CD8-positive, alpha-beta memory T cell (primary cell): ENCODE measurements at regions of chr6 and their contacts with region 1.

Region 1: GRCh38 chr6:134063966-134064445 is 11.6 kb upstream of the SLC2A12 start:
- DNase-seq: peak; percentile 16 to 65 (median 40)
- H3K4me3 ChIP-seq: no peak overlapping the region
- H3K4me3 Mint-ChIP-seq: no peak overlapping the region
- H3K27ac ChIP-seq: no peak overlapping the region
- H3K27ac Mint-ChIP-seq: no peak overlapping the region
- H3K4me1 ChIP-seq: no peaks in the 10 kb centered on the region
- H3K4me1 Mint-ChIP-seq: peaks cover 0 to 4% (median 0%) of the 10 kb centered on the region in 3 donors
- H3K27me3 ChIP-seq: no peaks in the 10 kb centered on the region
- H3K27me3 Mint-ChIP-seq: peaks cover 2 to 7% of the 10 kb centered on the region in 2 donors

Region 2: DNA sequence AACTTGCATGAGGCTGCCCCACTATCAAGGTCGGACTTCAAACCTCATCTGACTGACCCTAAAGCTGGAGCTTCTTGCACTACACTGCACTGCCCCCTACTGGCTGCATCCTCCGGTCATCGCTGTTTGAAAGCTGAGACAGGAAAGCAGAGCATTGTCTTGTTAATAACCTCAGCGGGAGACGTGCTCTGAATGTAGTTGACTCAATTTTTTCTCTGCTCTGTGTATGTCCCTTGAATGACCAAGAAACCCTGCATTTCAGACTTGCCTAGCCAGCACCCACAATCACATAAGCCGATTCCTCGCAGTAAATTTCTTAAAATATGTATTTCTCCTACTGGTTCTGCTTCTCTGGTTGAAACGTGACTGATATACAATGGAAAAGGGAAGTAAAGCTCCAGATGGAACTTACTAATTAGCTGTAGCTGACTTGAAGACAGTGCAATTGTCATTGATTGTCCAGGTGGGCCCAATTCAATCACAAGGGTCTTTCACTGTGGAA is 147.3 kb before region 1 on chr6:
- CTCF ChIA-PET with region 1: interaction called, 104 read pairs
- POLR2A ChIA-PET with region 1: no interaction called
- DNase-seq: peak; percentile 26 to 71 (median 60)
- H3K4me3 ChIP-seq: no peak overlapping the region
- H3K4me3 Mint-ChIP-seq: peak overlapping the region in 2 of 7 donors; percentile 23 to 41
- H3K27ac ChIP-seq: no peak overlapping the region
- H3K27ac Mint-ChIP-seq: no peak overlapping the region
- H3K4me1 ChIP-seq: no peaks in the 10 kb centered on the region
- H3K4me1 Mint-ChIP-seq: peaks cover 3 to 5% (median 5%) of the 10 kb centered on the region in 3 donors
- H3K27me3 ChIP-seq: no peaks in the 10 kb centered on the region
- H3K27me3 Mint-ChIP-seq: peaks cover 12 to 23% of the 10 kb centered on the region in 2 donors

Region 3: GRCh38 chr6:133923938-133924593 is 139.9 kb before region 1 on chr6:
- CTCF ChIA-PET with region 1: interaction called, 104 read pairs
- POLR2A ChIA-PET with region 1: no interaction called
- DNase-seq: peak; percentile 13 to 64 (median 49)
- H3K4me3 ChIP-seq: no peak overlapping the region
- H3K4me3 Mint-ChIP-seq: no peak overlapping the region
- H3K27ac ChIP-seq: no peak overlapping the region
- H3K27ac Mint-ChIP-seq: no peak overlapping the region
- H3K4me1 ChIP-seq: no peaks in the 10 kb centered on the region
- H3K4me1 Mint-ChIP-seq: no peaks in the 10 kb centered on the region
- H3K27me3 ChIP-seq: peaks cover 4% of the 10 kb centered on the region
- H3K27me3 Mint-ChIP-seq: peaks cover 6 to 35% of the 10 kb centered on the region in 2 donors

Region 4: DNA sequence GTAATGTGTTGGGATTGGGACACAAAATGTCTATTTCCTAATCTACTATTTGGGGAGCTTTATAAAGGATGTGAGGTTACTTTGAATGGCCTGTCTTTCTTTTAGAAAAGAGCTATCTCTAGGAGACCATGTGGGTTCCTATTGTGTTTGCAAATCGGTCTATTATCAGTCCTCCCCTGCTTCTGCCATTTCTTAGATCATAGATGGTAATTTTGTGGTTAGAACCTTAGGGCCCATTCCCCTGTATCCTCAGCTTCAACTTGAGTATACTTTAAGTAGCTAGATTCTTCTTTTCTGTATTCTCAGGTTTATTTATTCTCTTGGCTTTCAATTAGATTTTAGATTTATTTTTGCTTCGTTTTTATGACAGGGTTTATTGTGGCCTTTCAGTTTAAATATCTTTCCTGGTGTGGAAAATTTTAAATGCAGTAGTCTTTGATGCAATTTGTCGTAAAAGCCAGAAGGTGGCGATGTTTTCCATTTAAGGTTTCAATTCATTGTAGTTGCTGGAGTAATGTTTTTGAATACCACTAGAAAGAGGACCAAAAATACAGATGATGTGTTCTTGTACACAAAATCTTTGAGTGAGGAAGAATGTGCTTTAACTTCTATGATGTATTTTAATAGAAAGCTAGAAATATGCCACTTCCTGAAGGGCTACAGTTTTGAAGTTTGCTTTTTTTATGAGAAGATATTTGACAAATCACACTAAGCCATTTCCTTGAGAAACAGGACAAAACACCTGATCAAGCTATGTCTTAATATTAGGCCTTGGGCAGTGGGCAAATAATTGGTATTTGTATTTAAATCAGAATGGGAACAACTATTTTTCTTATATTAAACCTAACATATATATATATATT is 90.7 kb before region 1 on chr6:
- CTCF ChIA-PET with region 1: interaction called, 10 read pairs
- POLR2A ChIA-PET with region 1: no interaction called
- DNase-seq: peak in 2 of 5 donors; percentile 26 to 39
- H3K4me3 ChIP-seq: no peak overlapping the region
- H3K4me3 Mint-ChIP-seq: no peak overlapping the region
- H3K27ac ChIP-seq: no peak overlapping the region
- H3K27ac Mint-ChIP-seq: peak overlapping the region in 5 of 8 donors; percentile 9 to 73 (median 12)
- H3K4me1 ChIP-seq: peaks cover 20% of the 10 kb centered on the region
- H3K4me1 Mint-ChIP-seq: peaks cover 49 to 82% (median 69%) of the 10 kb centered on the region in 3 donors
- H3K27me3 ChIP-seq: no peaks in the 10 kb centered on the region
- H3K27me3 Mint-ChIP-seq: no peaks in the 10 kb centered on the region

Region 5: DNA sequence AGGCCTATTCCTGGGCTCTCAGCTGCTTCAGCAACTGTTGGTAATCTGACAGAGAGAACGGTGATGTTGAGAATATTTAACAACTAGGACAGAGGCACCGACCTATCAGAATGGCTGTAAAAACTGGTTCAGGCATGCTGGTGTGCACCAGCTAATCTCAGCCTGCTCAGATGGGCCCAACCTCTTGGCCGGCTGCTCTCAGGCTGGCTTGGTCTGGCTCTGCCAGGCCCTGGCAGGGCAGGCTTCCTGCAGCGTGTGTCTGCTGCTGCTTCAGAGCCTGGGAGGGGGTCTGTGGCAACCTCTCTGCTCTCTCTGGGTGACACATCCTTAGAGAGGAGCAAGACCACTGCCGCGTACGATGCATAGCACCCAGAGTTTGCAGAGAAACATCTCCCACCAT is 16.3 kb before region 1 on chr6:
- CTCF ChIA-PET with region 1: interaction called, 21 read pairs
- POLR2A ChIA-PET with region 1: no interaction called
- DNase-seq: no peak
- H3K4me3 ChIP-seq: no peak overlapping the region
- H3K4me3 Mint-ChIP-seq: no peak overlapping the region
- H3K27ac ChIP-seq: no peak overlapping the region
- H3K27ac Mint-ChIP-seq: no peak overlapping the region
- H3K4me1 ChIP-seq: peaks cover 6% of the 10 kb centered on the region
- H3K4me1 Mint-ChIP-seq: peaks cover 8 to 13% (median 9%) of the 10 kb centered on the region in 3 donors
- H3K27me3 ChIP-seq: no peaks in the 10 kb centered on the region
- H3K27me3 Mint-ChIP-seq: peaks cover 12 to 35% of the 10 kb centered on the region in 2 donors

Region 6: DNA sequence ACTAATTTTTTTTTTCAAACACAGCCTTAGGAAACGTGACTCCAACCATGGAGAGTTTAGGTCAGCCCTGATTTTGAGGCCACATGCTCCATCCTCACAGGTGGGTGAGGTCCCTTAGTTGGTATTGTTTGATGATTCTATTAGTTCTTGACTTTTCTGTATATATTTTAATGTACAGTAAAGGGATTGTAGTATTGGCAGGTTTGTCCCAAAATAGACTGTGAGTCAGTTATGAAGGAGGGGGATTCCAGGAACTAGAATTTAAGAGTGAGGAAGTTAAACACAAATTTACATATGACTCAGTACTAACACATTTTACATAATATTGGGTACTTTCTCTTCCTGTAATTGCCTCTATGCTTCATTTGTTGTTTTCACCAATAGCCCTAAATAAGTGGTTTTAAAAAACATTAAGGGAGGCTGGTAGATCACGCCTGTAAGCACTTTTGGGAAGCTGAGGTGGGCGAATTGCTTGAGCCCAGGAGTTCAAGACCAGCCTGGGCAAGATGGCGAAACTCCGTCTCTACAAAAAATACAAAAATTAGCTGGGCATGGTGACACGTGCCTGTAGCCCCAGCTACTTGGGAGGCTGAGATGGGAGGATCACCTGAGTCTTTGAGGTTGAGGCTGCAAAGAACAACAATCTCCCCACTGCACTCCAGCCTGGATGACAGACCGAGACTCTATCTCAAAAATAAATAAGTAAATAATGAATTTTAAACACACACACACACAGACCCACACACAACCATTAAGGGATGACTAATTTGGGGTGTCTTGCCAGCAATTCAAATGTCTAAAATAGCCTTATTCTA is 172.1 kb after region 1 on chr6:
- CTCF ChIA-PET with region 1: no interaction called
- POLR2A ChIA-PET with region 1: no interaction called
- DNase-seq: peak in 1 of 5 donors; percentile 11
- H3K4me3 ChIP-seq: no peak overlapping the region
- H3K4me3 Mint-ChIP-seq: peak overlapping the region in 2 of 7 donors; percentile 30 to 38
- H3K27ac ChIP-seq: peak overlapping the region; percentile 48
- H3K27ac Mint-ChIP-seq: peak overlapping the region in 6 of 8 donors; percentile 6 to 77 (median 52)
- H3K4me1 ChIP-seq: peaks cover 34% of the 10 kb centered on the region
- H3K4me1 Mint-ChIP-seq: peaks cover 27 to 44% (median 43%) of the 10 kb centered on the region in 3 donors
- H3K27me3 ChIP-seq: no peaks in the 10 kb centered on the region
- H3K27me3 Mint-ChIP-seq: no peaks in the 10 kb centered on the region